Endothelial cell of umbilical vein (primary cell): ENCODE measurements at regions of chrX and their contacts with region 1.

Region 1: GRCh38 chrX:8743126-8743732 is 11.3 kb upstream of the ANOS1 start:
- DNase-seq: peak; percentile 26
- H3K4me3 ChIP-seq: no peak overlapping the region
- H3K27ac ChIP-seq: no peak overlapping the region
- H3K4me1 ChIP-seq: no peaks in the 10 kb centered on the region
- H3K27me3 ChIP-seq: no peaks in the 10 kb centered on the region
- CTCF ChIP-seq: peak; percentile 59 to 67
- POLR2A ChIP-seq: no peak

Region 2: DNA sequence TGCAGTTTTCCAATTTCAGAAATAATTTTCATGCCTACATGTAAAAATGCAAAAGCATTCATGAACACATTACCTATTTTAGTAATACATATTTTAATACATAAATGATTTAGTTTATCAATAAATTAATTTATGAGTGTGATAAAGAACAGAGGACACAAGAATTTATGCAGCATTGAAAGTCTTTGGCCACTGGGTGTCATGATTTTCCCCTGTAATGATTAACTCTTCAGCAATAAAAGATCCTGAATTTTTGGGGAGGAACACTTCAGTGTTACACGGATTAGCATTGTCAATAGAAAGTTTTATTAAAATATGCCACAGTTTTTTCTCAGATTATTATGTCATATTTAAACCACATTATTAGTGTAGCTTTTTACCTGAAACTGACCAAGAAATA is 563.6 kb before region 1 on chrX:
- CTCF ChIA-PET with region 1: no interaction called
- POLR2A ChIA-PET with region 1: no interaction called
- dilution Hi-C with region 1: no loop called
- intact Hi-C with region 1: loop called (anchors 10 kb)
- DNase-seq: no peak
- H3K4me3 ChIP-seq: no peak overlapping the region
- H3K27ac ChIP-seq: no peak overlapping the region
- H3K4me1 ChIP-seq: no peaks in the 10 kb centered on the region
- H3K27me3 ChIP-seq: no peaks in the 10 kb centered on the region
- CTCF ChIP-seq: no peak
- POLR2A ChIP-seq: no peak

Region 3: DNA sequence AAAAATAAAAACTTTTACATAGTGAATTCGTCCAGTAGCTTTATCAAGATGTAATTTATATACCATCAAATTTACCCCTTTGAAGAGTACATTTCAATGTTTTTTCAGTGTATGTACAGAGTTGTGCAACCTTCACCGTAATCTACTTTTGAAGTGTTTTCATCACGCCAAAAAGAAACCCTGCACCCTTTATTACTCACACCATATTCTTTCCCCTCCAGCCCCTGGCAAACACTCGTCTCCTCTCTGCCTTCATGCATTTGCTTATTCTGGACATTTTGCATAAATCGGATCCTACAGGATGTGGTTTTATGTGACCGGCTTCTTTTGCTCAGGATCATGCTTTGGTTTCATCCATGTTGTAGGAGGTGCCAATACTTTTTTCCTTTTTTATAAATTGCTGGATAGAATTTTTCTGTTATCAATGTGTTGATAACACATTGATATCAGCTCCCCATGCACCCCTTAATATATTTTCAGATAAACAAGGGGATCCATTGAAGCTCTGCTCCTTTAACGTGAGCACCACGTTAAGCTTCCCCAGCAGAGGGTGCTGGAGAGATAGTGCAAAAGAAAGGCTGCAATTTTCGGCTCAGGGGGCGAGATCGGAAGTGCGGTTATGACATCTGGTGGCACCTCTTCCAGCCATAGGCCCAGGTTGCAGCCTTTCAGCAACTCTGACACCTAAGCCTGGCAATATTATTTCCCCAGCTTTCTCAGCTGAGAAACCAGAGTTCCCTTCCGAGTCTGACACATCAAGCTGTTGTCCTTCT is 378.7 kb before region 1 on chrX:
- CTCF ChIA-PET with region 1: interaction called, 16 read pairs
- POLR2A ChIA-PET with region 1: no interaction called
- dilution Hi-C with region 1: no loop called
- intact Hi-C with region 1: loop called (anchors 1 kb)
- DNase-seq: no peak
- H3K4me3 ChIP-seq: no peak overlapping the region
- H3K27ac ChIP-seq: no peak overlapping the region
- H3K4me1 ChIP-seq: no peaks in the 10 kb centered on the region
- H3K27me3 ChIP-seq: no peaks in the 10 kb centered on the region
- CTCF ChIP-seq: peak in 1 of 2 donors; percentile 23
- POLR2A ChIP-seq: no peak

Region 4: DNA sequence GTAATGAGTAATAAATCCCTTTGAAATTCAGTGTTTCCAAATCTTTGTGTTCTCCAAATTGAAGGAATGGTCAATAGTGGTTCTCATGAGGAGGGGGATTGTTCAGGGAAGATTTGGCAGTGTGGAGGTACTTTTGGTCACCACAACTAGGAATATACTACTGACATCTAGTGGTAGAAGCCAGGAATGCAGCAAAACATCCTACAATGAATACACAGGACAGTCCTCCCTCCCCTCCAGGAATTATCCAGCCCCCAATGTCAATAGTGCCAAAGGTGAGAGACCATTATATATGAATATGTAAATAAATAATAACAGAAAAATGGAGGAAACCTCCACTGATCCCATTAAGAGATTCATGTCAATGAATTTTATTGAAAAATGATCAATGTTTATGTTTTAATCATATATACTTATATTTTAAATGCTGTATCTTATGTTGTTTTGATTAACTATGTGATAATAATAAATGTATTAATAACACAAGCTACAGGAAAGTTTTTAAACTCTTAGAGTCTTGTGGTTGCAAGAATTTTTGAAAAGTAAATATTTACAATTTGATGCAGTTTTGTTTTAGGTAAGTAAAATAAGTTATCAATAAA is 72.3 kb after region 1 on chrX:
- CTCF ChIA-PET with region 1: interaction called, 5 read pairs
- POLR2A ChIA-PET with region 1: no interaction called
- dilution Hi-C with region 1: no loop called
- intact Hi-C with region 1: loop called (anchors 1 kb)
- DNase-seq: peak; percentile 36
- H3K4me3 ChIP-seq: no peak overlapping the region
- H3K27ac ChIP-seq: no peak overlapping the region
- H3K4me1 ChIP-seq: no peaks in the 10 kb centered on the region
- H3K27me3 ChIP-seq: no peaks in the 10 kb centered on the region
- CTCF ChIP-seq: peak; percentile 40 to 58
- POLR2A ChIP-seq: no peak